ENCODE measurements at regions of chr1 and their contacts with region 1.

Region 1: DNA sequence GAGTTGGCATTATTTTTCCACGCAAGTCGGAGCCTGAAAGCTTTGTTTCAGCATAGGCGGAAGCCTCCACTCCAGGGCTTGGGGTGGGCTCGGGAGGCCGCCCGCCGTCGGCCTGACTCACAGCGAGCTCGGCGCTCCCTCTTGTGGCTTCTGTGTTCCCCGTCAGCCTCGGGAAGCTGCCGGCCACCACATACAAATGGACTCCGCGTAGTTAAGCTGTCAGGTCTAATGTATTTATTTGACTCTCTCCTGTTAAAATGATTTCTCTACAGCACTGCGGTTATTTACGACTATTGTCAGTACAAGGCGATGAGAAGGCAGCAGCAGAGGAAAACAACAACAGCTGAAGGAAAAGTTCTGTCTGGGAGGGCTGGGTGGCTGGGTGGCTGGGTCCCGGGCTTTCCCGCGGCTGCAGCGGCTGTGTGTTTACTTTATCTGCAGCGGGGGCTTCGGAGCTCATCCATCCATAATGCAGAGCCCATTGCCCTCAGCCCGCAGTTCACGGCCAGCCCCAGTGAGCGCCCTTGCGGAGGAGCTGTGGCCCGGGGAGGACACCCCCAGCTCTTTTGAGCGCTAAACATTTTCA is 375.7 kb upstream of the CAMK1G start:
- DNase-seq: peak; percentile 86
- ATAC-seq: peak; percentile 82
- H3K4me3 ChIP-seq: peak overlapping the region; percentile 66
- H3K27ac ChIP-seq: peak overlapping the region; percentile 26
- H3K4me1 ChIP-seq: peaks cover 25% of the 10 kb centered on the region
- H3K27me3 ChIP-seq: no peaks in the 10 kb centered on the region
- CTCF ChIP-seq: peak; percentile 98

Region 2: DNA sequence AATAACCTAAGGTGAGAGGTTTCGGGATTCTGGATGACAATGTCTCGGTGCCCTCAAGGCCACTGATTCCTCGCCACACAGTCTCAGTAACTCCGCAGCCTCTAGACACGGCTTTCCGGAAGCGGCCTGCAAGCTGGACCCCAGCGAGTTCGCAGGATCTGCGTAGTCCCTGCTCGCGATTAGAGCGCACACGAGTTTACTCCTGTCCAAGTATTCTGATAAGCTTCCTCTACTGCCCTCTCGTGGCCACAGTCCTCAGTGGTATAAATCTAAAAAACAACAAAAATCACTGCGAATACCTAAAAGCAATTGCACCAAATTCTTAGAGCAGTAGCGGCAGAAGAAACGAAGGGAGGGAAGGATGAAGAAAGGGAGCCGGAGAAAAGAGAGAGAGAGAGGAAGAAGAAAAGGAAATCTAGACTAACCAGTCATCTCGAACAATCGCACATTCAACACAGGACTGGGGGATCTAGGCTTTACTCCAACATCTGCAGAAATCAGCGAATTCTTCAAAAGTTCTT is 962.5 kb before region 1 on chr1:
- CTCF ChIA-PET with region 1: interaction called, 3 read pairs
- POLR2A ChIA-PET with region 1: no interaction called
- intact Hi-C with region 1: loop called (anchors 5 kb)
- DNase-seq: peak; percentile 97
- ATAC-seq: peak; percentile 53
- H3K4me3 ChIP-seq: peak overlapping the region; percentile 93
- H3K27ac ChIP-seq: no peak overlapping the region
- H3K4me1 ChIP-seq: peaks cover 22% of the 10 kb centered on the region
- H3K27me3 ChIP-seq: no peaks in the 10 kb centered on the region
- CTCF ChIP-seq: peak; percentile 95

Region 3: GRCh38 chr1:208929575-208929974 is 278.2 kb before region 1 on chr1:
- CTCF ChIA-PET with region 1: no interaction called
- POLR2A ChIA-PET with region 1: no interaction called
- intact Hi-C with region 1: loop called (anchors 5 kb)
- DNase-seq: peak; percentile 97
- ATAC-seq: peak; percentile 88
- H3K4me3 ChIP-seq: no peak overlapping the region
- H3K27ac ChIP-seq: peak overlapping the region; percentile 91
- H3K4me1 ChIP-seq: peaks cover 56% of the 10 kb centered on the region
- H3K27me3 ChIP-seq: no peaks in the 10 kb centered on the region
- CTCF ChIP-seq: no peak

Region 4: GRCh38 chr1:209162651-209163050 is 45.1 kb before region 1 on chr1:
- CTCF ChIA-PET with region 1: no interaction called
- POLR2A ChIA-PET with region 1: no interaction called
- intact Hi-C with region 1: no loop called
- DNase-seq: no peak
- ATAC-seq: no peak
- H3K4me3 ChIP-seq: no peak overlapping the region
- H3K27ac ChIP-seq: no peak overlapping the region
- H3K4me1 ChIP-seq: peaks cover 2% of the 10 kb centered on the region
- H3K27me3 ChIP-seq: no peaks in the 10 kb centered on the region
- CTCF ChIP-seq: no peak

Region 5: DNA sequence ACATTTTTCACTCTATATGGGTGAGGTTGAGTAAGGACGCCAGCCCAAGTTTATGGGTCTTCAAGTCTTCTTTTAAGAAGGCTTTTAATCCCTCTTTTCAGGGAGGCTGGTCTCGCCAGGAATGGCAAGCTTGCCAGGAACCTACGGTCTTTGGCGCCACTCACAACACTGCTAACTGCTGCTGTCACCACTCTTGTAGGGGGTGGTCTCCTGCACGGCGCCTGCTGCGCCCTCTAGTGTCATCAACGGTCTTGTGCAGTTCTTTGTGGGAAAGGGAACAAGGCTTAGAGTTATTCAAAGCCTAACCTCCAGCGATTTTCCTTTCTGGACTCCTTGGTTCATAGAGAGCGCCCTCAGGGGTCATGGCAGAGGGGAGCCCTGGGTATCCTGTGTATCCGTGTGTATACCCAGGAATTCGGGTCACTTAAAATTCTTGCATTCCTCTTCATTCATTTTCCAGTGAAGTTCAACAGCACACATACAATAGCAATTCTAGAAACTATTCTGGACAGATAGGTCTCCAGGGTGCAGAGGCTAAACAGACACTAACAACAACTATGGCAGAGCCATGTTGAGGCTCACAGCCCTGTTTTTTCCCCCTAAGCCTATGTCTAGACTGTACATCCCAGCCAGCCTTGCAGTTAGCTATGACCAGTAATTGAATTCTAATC is 17.1 kb before region 1 on chr1:
- CTCF ChIA-PET with region 1: interaction called, 10 read pairs
- POLR2A ChIA-PET with region 1: no interaction called
- intact Hi-C with region 1: no loop called
- DNase-seq: peak; percentile 86
- ATAC-seq: peak; percentile 90
- H3K4me3 ChIP-seq: no peak overlapping the region
- H3K27ac ChIP-seq: no peak overlapping the region
- H3K4me1 ChIP-seq: peaks cover 4% of the 10 kb centered on the region; the same call in 1 of the 2 replicates
- H3K27me3 ChIP-seq: no peaks in the 10 kb centered on the region
- CTCF ChIP-seq: peak; percentile 97

Region 6: GRCh38 chr1:209354111-209354839 is 146.5 kb after region 1 on chr1:
- CTCF ChIA-PET with region 1: interaction called, 8 read pairs
- POLR2A ChIA-PET with region 1: no interaction called
- intact Hi-C with region 1: loop called (anchors 1 kb)
- DNase-seq: peak; percentile 98
- ATAC-seq: peak; percentile 93
- H3K4me3 ChIP-seq: no peak overlapping the region
- H3K27ac ChIP-seq: peak overlapping the region; percentile 19; the same call in 1 of the 2 replicates
- H3K4me1 ChIP-seq: peaks cover 36% of the 10 kb centered on the region
- H3K27me3 ChIP-seq: no peaks in the 10 kb centered on the region
- CTCF ChIP-seq: peak; percentile 97

Region 7: GRCh38 chr1:209435654-209436566 is 228.1 kb after region 1 on chr1:
- CTCF ChIA-PET with region 1: interaction called, 6 read pairs
- POLR2A ChIA-PET with region 1: no interaction called
- intact Hi-C with region 1: loop called (anchors 1 kb)
- DNase-seq: peak; percentile 98
- ATAC-seq: peak; percentile 81
- H3K4me3 ChIP-seq: no peak overlapping the region
- H3K27ac ChIP-seq: peak overlapping the region; percentile 88
- H3K4me1 ChIP-seq: peaks cover 53% of the 10 kb centered on the region
- H3K27me3 ChIP-seq: no peaks in the 10 kb centered on the region
- CTCF ChIP-seq: peak; percentile 98

Region 8: GRCh38 chr1:209513226-209513625 is 305.4 kb after region 1 on chr1:
- CTCF ChIA-PET with region 1: interaction called, 3 read pairs
- POLR2A ChIA-PET with region 1: no interaction called
- intact Hi-C with region 1: loop called (anchors 5 kb)
- DNase-seq: peak; percentile 85
- ATAC-seq: peak; percentile 76
- H3K4me3 ChIP-seq: no peak overlapping the region
- H3K27ac ChIP-seq: no peak overlapping the region
- H3K4me1 ChIP-seq: no peaks in the 10 kb centered on the region
- H3K27me3 ChIP-seq: no peaks in the 10 kb centered on the region
- CTCF ChIP-seq: peak; percentile 89

Measured in PC-3 (cell line).